Activated CD4-positive, alpha-beta T cell treated with anti-CD3 and anti-CD28 coated beads for 36 hours (primary cell): ENCODE measurements at regions of chr17 and their contacts with region 1.

Region 1: GRCh38 chr17:27578718-27579085 is 52.3 kb upstream of the LGALS9 start:
- DNase-seq: peak; percentile 87
- ATAC-seq: peak; percentile 78
- H3K4me3 Mint-ChIP-seq: peak overlapping the region; percentile 27
- H3K27ac Mint-ChIP-seq: peak overlapping the region; percentile 91
- H3K4me1 Mint-ChIP-seq: peaks cover 73% of the 10 kb centered on the region
- H3K27me3 Mint-ChIP-seq: no peaks in the 10 kb centered on the region

Region 2: DNA sequence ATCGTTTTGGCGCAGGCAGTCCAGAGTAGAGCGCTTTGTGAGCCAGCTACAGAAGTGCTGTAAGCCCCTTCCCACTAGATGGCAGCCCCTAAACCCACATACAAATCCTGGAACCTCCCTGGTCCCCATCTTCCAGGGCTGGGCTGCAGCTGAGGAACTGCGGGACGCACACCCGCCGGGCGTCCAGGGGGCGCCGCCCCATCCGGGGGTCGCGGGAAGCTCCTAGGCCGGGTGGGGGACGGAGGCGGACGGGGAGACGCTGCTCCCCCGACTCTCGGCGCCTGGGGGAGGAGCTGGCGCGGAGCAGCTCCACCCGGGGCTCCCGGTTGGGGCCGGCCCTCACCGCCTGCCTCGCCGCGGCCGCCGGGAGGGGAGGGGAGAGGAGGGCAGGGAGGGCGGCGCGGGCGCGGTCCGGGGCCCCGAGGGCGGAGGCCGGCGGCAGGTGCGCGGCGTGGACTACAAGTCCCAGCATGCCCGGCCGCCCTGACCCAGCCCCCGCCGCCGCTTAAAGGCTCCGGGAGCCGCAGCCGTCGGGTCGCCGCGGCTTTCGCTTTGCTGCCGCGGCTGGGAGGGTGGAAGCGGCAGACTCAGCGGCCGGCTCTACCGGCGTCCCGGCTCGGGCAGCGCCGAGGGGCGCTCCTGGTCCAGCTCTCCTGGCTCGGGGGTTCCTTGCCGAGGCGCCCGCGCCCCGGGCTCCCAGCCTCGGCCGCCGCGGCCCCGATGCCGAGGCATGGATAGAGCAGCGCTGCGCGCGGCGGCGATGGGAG is 122.6 kb before region 1 on chr17 and contains the start of gene KSR1:
- CTCF ChIA-PET with region 1: no interaction called
- POLR2A ChIA-PET with region 1: no interaction called
- intact Hi-C with region 1: loop called in 1 of 2 experiments (anchors 2 kb)
- DNase-seq: peak; percentile 92
- ATAC-seq: peak; percentile 93
- H3K4me3 Mint-ChIP-seq: peak within 1 kb of the TSS; percentile 88
- H3K27ac Mint-ChIP-seq: peak within 1 kb of the TSS; percentile 83
- H3K4me1 Mint-ChIP-seq: peaks cover 43% of the 10 kb centered on the region
- H3K27me3 Mint-ChIP-seq: peaks cover 6% of the 10 kb centered on the region
- total RNA-seq, gene KSR1: 96.6 to 113 TPM

Region 3: GRCh38 chr17:27466743-27467375 is 111.8 kb before region 1 on chr17:
- CTCF ChIA-PET with region 1: no interaction called
- POLR2A ChIA-PET with region 1: interaction called, 6 read pairs
- intact Hi-C with region 1: loop called (anchors 1 kb)
- DNase-seq: peak; percentile 91
- ATAC-seq: peak; percentile 84
- H3K4me3 Mint-ChIP-seq: peak overlapping the region; percentile 71
- H3K27ac Mint-ChIP-seq: peak overlapping the region; percentile 96
- H3K4me1 Mint-ChIP-seq: peaks cover 93% of the 10 kb centered on the region
- H3K27me3 Mint-ChIP-seq: no peaks in the 10 kb centered on the region

Region 4: GRCh38 chr17:27532269-27533263 is 46.1 kb before region 1 on chr17:
- CTCF ChIA-PET with region 1: no interaction called
- POLR2A ChIA-PET with region 1: no interaction called
- intact Hi-C with region 1: no loop called
- DNase-seq: no peak
- ATAC-seq: no peak
- H3K4me3 Mint-ChIP-seq: no peak overlapping the region
- H3K27ac Mint-ChIP-seq: no peak overlapping the region
- H3K4me1 Mint-ChIP-seq: peaks cover 41% of the 10 kb centered on the region
- H3K27me3 Mint-ChIP-seq: no peaks in the 10 kb centered on the region

Region 5: DNA sequence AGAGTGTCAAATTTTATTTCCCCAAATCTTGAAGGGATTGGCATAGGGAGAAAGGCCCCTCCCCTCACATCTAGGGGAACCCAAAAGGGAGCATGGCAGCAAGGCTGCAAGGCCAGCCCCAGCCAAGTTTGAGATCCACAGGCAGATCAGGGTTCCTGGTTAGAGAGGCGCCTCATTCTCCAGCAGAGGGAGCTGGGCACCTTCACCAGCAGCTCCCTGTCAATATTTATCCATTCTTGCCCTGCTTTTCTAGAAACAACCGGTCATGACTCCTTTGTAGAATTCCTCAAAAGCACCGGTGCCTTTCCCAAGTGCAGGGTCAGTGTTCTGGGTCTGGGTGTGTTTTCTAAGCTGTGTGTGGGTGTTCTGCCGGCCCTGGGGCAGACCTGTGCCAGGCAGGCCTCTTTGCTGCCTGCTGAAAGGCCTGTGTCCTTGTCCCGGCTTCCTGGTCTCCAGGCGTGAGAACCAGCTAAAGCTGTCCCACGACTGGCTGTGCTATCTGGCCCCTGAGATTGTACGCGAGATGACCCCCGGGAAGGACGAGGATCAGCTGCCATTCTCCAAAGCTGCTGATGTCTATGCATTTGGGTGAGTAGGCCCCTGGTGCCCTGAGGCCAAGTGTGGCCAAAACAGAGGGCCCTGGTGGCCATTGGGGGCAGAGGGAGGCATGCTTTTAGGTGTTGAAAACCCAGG is 31.1 kb after region 1 on chr17:
- CTCF ChIA-PET with region 1: no interaction called
- POLR2A ChIA-PET with region 1: no interaction called
- intact Hi-C with region 1: loop called in 1 of 2 experiments (anchors 5 kb)
- DNase-seq: peak; percentile 47
- ATAC-seq: no peak
- H3K4me3 Mint-ChIP-seq: no peak overlapping the region
- H3K27ac Mint-ChIP-seq: no peak overlapping the region
- H3K4me1 Mint-ChIP-seq: peaks cover 21% of the 10 kb centered on the region
- H3K27me3 Mint-ChIP-seq: no peaks in the 10 kb centered on the region

Region 6: GRCh38 chr17:27628376-27628775 is 49.7 kb after region 1 on chr17:
- CTCF ChIA-PET with region 1: no interaction called
- POLR2A ChIA-PET with region 1: no interaction called
- intact Hi-C with region 1: loop called in 1 of 2 experiments (anchors 5 kb)
- DNase-seq: peak; percentile 30
- ATAC-seq: peak; percentile 16
- H3K4me3 Mint-ChIP-seq: no peak overlapping the region
- H3K27ac Mint-ChIP-seq: no peak overlapping the region
- H3K4me1 Mint-ChIP-seq: peaks cover 26% of the 10 kb centered on the region
- H3K27me3 Mint-ChIP-seq: no peaks in the 10 kb centered on the region